CD14-positive monocyte (primary cell): ENCODE measurements at regions of chr13 and their contacts with region 1.

Region 1: GRCh38 chr13:66700059-66700690 is 530.0 kb downstream of the PCDH9 start:
- DNase-seq: no peak
- H3K4me3 ChIP-seq: no peak overlapping the region
- H3K4me3 Mint-ChIP-seq: no peak overlapping the region
- H3K27ac ChIP-seq: no peak overlapping the region
- H3K27ac Mint-ChIP-seq: no peak overlapping the region
- H3K4me1 ChIP-seq: no peaks in the 10 kb centered on the region
- H3K4me1 Mint-ChIP-seq: no peaks in the 10 kb centered on the region
- H3K27me3 ChIP-seq: no peaks in the 10 kb centered on the region
- H3K27me3 Mint-ChIP-seq: peaks cover 0 to 2% (median 2%) of the 10 kb centered on the region in 3 donors
- CTCF ChIP-seq: no peak

Region 2: DNA sequence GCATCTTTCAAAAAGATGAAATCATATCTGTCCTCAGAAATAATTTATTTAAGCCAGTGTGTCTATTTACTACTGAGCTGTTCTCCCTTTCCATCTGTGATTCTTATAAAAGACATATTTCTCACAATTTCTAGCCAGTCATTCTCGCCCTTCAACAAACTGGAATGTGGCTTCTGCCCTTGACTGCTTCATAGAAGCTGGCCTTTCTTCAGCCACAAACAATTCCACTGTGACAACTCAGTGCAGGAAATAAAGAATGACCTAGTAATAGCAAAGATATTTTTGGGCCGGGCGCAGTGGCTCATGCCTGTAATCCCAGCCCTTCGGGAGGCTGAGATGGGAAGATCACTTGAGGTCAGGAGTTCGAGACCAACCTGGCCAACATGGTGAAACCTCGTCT is 125.6 kb before region 1 on chr13:
- intact Hi-C with region 1: loop called in 1 of 2 experiments (anchors 10 kb)
- DNase-seq: no peak
- H3K4me3 ChIP-seq: no peak overlapping the region
- H3K4me3 Mint-ChIP-seq: no peak overlapping the region
- H3K27ac ChIP-seq: no peak overlapping the region
- H3K27ac Mint-ChIP-seq: no peak overlapping the region
- H3K4me1 ChIP-seq: no peaks in the 10 kb centered on the region
- H3K4me1 Mint-ChIP-seq: no peaks in the 10 kb centered on the region
- H3K27me3 ChIP-seq: no peaks in the 10 kb centered on the region
- H3K27me3 Mint-ChIP-seq: no peaks in the 10 kb centered on the region
- CTCF ChIP-seq: no peak